ENCODE measurements at regions of chr22 and their contacts with region 1.

Region 1: GRCh38 chr22:38872172-38872830 is at the start of gene CBX6:
- DNase-seq: peak; percentile 90 to 98 (median 95)
- ATAC-seq: peak; percentile 89
- H3K4me3 ChIP-seq: peak within 1 kb of the TSS; percentile 98
- H3K4me3 Mint-ChIP-seq: peak within 1 kb of the TSS; percentile 88 to 97 (median 93)
- H3K27ac ChIP-seq: peak within 1 kb of the TSS; percentile 73
- H3K27ac Mint-ChIP-seq: peak within 1 kb of the TSS; percentile 81 to 93 (median 89)
- H3K4me1 ChIP-seq: peaks cover 28 to 34% of the 10 kb centered on the region in 2 donors
- H3K4me1 Mint-ChIP-seq: peaks cover 35 to 55% (median 49%) of the 10 kb centered on the region in 7 donors
- H3K27me3 ChIP-seq: no peaks in the 10 kb centered on the region
- H3K27me3 Mint-ChIP-seq: peaks cover 0 to 18% (median 0%) of the 10 kb centered on the region in 5 donors
- total RNA-seq, gene CBX6: 41.7 to 77.0 (median 73.4) TPM

Region 2: GRCh38 chr22:38317122-38317994 is 554.9 kb before region 1 on chr22 and contains the start of gene CSNK1E:
- CTCF ChIA-PET with region 1: no interaction called
- POLR2A ChIA-PET with region 1: no interaction called
- intact Hi-C with region 1: loop called in 1 of 2 experiments (anchors 2 kb)
- DNase-seq: peak; percentile 67 to 85 (median 74)
- ATAC-seq: peak; percentile 79
- H3K4me3 ChIP-seq: peak within 1 kb of the TSS; percentile 62
- H3K4me3 Mint-ChIP-seq: peak within 1 kb of the TSS; percentile 84 to 92 (median 89)
- H3K27ac ChIP-seq: peak within 1 kb of the TSS; percentile 91
- H3K27ac Mint-ChIP-seq: peak within 1 kb of the TSS; percentile 94 to 97 (median 95)
- H3K4me1 ChIP-seq: peaks cover 28 to 39% of the 10 kb centered on the region in 2 donors
- H3K4me1 Mint-ChIP-seq: peaks cover 31 to 49% (median 42%) of the 10 kb centered on the region in 7 donors
- H3K27me3 ChIP-seq: no peaks in the 10 kb centered on the region
- H3K27me3 Mint-ChIP-seq: no peaks in the 10 kb centered on the region
- total RNA-seq, gene CSNK1E: 71.6 to 143 (median 91.9) TPM

Region 3: GRCh38 chr22:38927033-38927781 is 54.9 kb after region 1 on chr22:
- CTCF ChIA-PET with region 1: no interaction called
- POLR2A ChIA-PET with region 1: interaction called, 4 read pairs
- intact Hi-C with region 1: loop called (anchors 1 to 2 kb)
- DNase-seq: peak in 7 of 9 donors; percentile 4 to 61 (median 12)
- ATAC-seq: peak; percentile 80
- H3K4me3 ChIP-seq: no peak overlapping the region
- H3K4me3 Mint-ChIP-seq: peak overlapping the region; percentile 18 to 79 (median 66)
- H3K27ac ChIP-seq: no peak overlapping the region
- H3K27ac Mint-ChIP-seq: no peak overlapping the region
- H3K4me1 ChIP-seq: no peaks in the 10 kb centered on the region
- H3K4me1 Mint-ChIP-seq: peaks cover 3 to 13% (median 5%) of the 10 kb centered on the region in 7 donors
- H3K27me3 ChIP-seq: no peaks in the 10 kb centered on the region
- H3K27me3 Mint-ChIP-seq: peaks cover 27 to 59% (median 34%) of the 10 kb centered on the region in 5 donors

Region 4: DNA sequence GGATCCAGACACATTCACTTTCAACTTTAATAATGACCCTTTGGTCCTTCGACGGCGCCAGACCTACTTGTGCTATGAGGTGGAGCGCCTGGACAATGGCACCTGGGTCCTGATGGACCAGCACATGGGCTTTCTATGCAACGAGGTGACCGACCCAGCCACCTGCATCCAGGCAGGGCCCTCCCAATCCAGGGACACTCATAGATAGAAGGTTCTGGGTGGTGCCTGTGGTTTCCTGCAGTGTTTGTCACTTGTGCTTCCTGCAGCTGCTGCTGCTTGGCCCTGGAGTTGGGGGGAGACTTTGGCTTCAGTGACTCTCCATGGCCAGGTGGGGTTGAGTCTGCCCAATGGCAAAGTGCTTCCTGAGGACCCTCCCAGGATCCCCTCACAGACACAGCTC is 117.2 kb after region 1 on chr22:
- CTCF ChIA-PET with region 1: interaction called, 3 read pairs
- POLR2A ChIA-PET with region 1: interaction called, 3 read pairs
- intact Hi-C with region 1: loop called (anchors 1 to 5 kb)
- DNase-seq: peak in 1 of 9 donors; percentile 18
- ATAC-seq: no peak
- H3K4me3 ChIP-seq: no peak overlapping the region
- H3K4me3 Mint-ChIP-seq: peak overlapping the region in 2 of 10 donors; percentile 52 to 58
- H3K27ac ChIP-seq: no peak overlapping the region
- H3K27ac Mint-ChIP-seq: peak overlapping the region in 4 of 9 donors; percentile 9 to 87 (median 49)
- H3K4me1 ChIP-seq: peaks cover 6 to 13% of the 10 kb centered on the region in 2 donors
- H3K4me1 Mint-ChIP-seq: peaks cover 5 to 60% (median 21%) of the 10 kb centered on the region in 7 donors
- H3K27me3 ChIP-seq: no peaks in the 10 kb centered on the region
- H3K27me3 Mint-ChIP-seq: peaks cover 0 to 5% (median 4%) of the 10 kb centered on the region in 5 donors

Region 5: GRCh38 chr22:39122786-39123475 is 250.6 kb after region 1 on chr22:
- CTCF ChIA-PET with region 1: interaction called, 8 read pairs
- POLR2A ChIA-PET with region 1: no interaction called
- intact Hi-C with region 1: loop called (anchors 1 kb)
- DNase-seq: no peak
- ATAC-seq: no peak
- H3K4me3 ChIP-seq: no peak overlapping the region
- H3K4me3 Mint-ChIP-seq: no peak overlapping the region
- H3K27ac ChIP-seq: no peak overlapping the region
- H3K27ac Mint-ChIP-seq: no peak overlapping the region
- H3K4me1 ChIP-seq: peaks cover 2 to 8% of the 10 kb centered on the region in 2 donors
- H3K4me1 Mint-ChIP-seq: peaks cover 2 to 15% (median 9%) of the 10 kb centered on the region in 7 donors
- H3K27me3 ChIP-seq: no peaks in the 10 kb centered on the region
- H3K27me3 Mint-ChIP-seq: no peaks in the 10 kb centered on the region

Region 6: GRCh38 chr22:39319270-39320022 is 447.1 kb after region 1 on chr22 and contains the start of gene RPL3:
- CTCF ChIA-PET with region 1: no interaction called
- POLR2A ChIA-PET with region 1: interaction called, 4 read pairs
- intact Hi-C with region 1: loop called (anchors 1 kb)
- DNase-seq: peak; percentile 97 to 99 (median 98)
- ATAC-seq: peak; percentile 93
- H3K4me3 ChIP-seq: peak within 1 kb of the TSS; percentile 81
- H3K4me3 Mint-ChIP-seq: peak within 1 kb of the TSS; percentile 95 to 100 (median 98)
- H3K27ac ChIP-seq: peak within 1 kb of the TSS; percentile 90
- H3K27ac Mint-ChIP-seq: peak within 1 kb of the TSS; percentile 95 to 99 (median 97)
- H3K4me1 ChIP-seq: peaks cover 34 to 39% of the 10 kb centered on the region in 2 donors
- H3K4me1 Mint-ChIP-seq: peaks cover 27 to 51% (median 35%) of the 10 kb centered on the region in 7 donors
- H3K27me3 ChIP-seq: no peaks in the 10 kb centered on the region
- H3K27me3 Mint-ChIP-seq: peaks cover 0 to 3% (median 0%) of the 10 kb centered on the region in 5 donors
- total RNA-seq, gene RPL3: 1,611 to 3,932 (median 3,789) TPM

Region 7: GRCh38 chr22:39428578-39429071 is 556.3 kb after region 1 on chr22:
- CTCF ChIA-PET with region 1: no interaction called
- POLR2A ChIA-PET with region 1: no interaction called
- intact Hi-C with region 1: no loop called
- DNase-seq: no peak
- ATAC-seq: no peak
- H3K4me3 ChIP-seq: no peak overlapping the region
- H3K4me3 Mint-ChIP-seq: no peak overlapping the region
- H3K27ac ChIP-seq: no peak overlapping the region
- H3K27ac Mint-ChIP-seq: no peak overlapping the region
- H3K4me1 ChIP-seq: no peaks in the 10 kb centered on the region
- H3K4me1 Mint-ChIP-seq: no peaks in the 10 kb centered on the region
- H3K27me3 ChIP-seq: no peaks in the 10 kb centered on the region
- H3K27me3 Mint-ChIP-seq: no peaks in the 10 kb centered on the region

Measured in naive thymus-derived CD4-positive, alpha-beta T cell (primary cell).